Activated CD4-positive, alpha-beta T cell treated with anti-CD3 and anti-CD28 coated beads for 36 hours (primary cell): ENCODE measurements at regions of chr6 and their contacts with region 1.

Region 1: GRCh38 chr6:135535989-135536414 is 38.5 kb upstream of the AHI1 start:
- DNase-seq: peak; percentile 8
- ATAC-seq: no peak
- H3K4me3 Mint-ChIP-seq: no peak overlapping the region
- H3K27ac Mint-ChIP-seq: no peak overlapping the region
- H3K4me1 Mint-ChIP-seq: peaks cover 27% of the 10 kb centered on the region
- H3K27me3 Mint-ChIP-seq: peaks cover 3% of the 10 kb centered on the region

Region 2: DNA sequence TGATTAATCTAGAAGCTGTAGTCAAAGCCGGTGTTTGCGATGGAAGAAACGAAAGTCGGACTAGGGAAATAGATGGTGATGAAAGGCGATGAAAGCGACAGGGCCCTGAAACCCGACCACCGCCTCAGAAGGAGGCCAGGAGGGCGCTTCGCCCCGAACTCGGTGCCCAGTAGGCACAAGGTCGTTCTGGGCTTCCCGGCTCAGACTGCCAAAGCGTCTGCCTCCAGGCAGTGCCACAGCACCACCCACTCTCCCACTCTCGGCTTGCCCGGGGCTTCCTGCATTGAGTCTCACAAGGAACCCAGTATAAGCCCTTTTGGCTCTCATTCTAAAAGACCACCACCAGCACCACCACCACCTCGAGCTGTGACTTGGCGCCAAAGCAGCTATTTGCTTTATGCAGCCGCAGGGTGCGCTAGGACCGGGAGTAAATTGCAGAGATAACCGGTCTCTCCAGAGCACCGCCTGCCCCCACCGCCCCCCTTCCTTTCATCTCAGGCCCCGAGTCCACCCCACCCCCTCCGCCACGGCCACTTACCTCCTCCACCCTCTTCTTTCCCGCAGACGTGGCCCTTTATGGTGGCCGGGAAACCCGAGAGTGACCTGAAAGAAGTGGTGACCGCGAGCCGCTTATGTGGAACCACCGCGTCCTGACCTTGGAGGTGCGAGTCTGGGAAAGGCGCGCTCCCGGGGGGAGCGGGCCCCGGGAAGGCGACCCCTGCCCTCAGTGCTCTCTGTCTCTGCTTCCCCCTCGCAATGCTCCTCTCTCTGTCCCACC is 1644.7 kb before region 1 on chr6:
- CTCF ChIA-PET with region 1: no interaction called
- POLR2A ChIA-PET with region 1: no interaction called
- intact Hi-C with region 1: no loop called
- DNase-seq: peak; percentile 43
- ATAC-seq: peak; percentile 42
- H3K4me3 Mint-ChIP-seq: peak overlapping the region; percentile 63
- H3K27ac Mint-ChIP-seq: no peak overlapping the region
- H3K4me1 Mint-ChIP-seq: peaks cover 41% of the 10 kb centered on the region
- H3K27me3 Mint-ChIP-seq: peaks cover 76% of the 10 kb centered on the region

Region 3: DNA sequence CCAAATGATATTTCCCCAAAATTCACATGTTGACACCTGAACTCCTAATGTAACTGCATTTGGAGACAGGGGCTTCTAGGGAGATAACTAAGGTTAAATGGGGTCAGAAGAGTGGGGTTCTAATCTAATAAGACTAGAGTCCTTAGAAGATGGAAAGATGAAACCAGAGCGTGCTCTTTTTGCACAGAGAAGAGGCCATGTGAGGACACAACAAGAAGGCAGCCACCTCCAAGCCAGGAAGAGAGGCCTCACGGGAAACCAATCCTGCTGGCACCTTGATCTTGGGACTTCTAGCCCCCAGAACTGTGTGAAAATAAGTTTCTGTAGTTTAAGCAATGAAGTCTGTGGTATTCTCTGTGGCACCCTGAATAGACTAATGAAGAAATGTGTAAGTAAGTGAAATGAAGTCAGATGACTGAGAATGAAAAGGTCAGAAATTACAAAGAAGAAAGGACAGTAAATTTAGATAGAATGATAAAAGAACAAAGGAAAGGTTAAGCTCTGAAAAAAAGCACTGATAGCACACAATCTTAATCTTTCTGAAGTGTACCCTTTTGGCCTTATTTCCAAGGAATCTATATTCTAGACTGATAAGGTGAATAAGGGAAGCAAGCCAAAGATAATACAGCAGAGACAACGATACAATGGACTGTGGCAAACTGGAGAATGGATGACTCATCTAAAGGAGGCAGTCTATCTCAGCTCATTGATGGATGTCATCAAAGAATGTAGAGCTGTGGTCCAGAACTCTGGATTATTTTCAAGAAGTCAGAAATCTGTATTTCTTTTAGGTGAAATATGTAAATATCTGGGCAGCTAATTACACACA is 244.5 kb before region 1 on chr6:
- CTCF ChIA-PET with region 1: no interaction called
- POLR2A ChIA-PET with region 1: no interaction called
- intact Hi-C with region 1: no loop called
- DNase-seq: no peak
- ATAC-seq: peak; percentile 64
- H3K4me3 Mint-ChIP-seq: no peak overlapping the region
- H3K27ac Mint-ChIP-seq: no peak overlapping the region
- H3K4me1 Mint-ChIP-seq: peaks cover 8% of the 10 kb centered on the region
- H3K27me3 Mint-ChIP-seq: no peaks in the 10 kb centered on the region

Region 4: GRCh38 chr6:135451693-135452092 is 84.3 kb before region 1 on chr6:
- CTCF ChIA-PET with region 1: interaction called, 8 read pairs
- POLR2A ChIA-PET with region 1: no interaction called
- intact Hi-C with region 1: loop called in 1 of 2 experiments (anchors 2 kb)
- DNase-seq: no peak
- ATAC-seq: no peak
- H3K4me3 Mint-ChIP-seq: no peak overlapping the region
- H3K27ac Mint-ChIP-seq: no peak overlapping the region
- H3K4me1 Mint-ChIP-seq: no peaks in the 10 kb centered on the region
- H3K27me3 Mint-ChIP-seq: no peaks in the 10 kb centered on the region

Region 5: DNA sequence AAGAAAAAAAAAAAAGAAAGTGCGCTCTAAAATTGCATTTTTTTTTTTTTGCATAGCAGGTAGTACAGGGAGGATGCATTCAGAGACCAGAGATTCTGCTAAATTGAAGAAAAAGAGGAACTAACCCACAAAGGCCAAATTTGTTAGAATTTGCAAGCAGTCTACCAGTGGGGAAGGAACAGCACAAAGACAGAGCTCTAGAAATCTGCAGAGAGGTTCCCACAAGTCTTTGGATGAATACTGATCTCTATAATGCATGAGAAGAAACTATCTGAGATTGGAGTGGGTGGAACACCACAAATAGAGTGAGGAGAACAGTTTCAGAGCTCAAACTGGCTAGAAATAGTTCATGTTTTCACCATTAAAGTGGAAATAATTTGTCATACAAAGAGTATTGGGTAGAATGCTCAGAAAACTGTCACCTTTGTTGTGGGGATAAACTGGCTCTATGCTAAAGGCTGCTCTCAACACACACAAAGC is 41.1 kb after region 1 on chr6:
- CTCF ChIA-PET with region 1: interaction called, 10 read pairs
- POLR2A ChIA-PET with region 1: interaction called, 4 read pairs
- intact Hi-C with region 1: loop called (anchors 1 to 5 kb)
- DNase-seq: no peak
- ATAC-seq: peak; percentile 94
- H3K4me3 Mint-ChIP-seq: peak overlapping the region; percentile 8
- H3K27ac Mint-ChIP-seq: peak overlapping the region; percentile 70
- H3K4me1 Mint-ChIP-seq: peaks cover 23% of the 10 kb centered on the region
- H3K27me3 Mint-ChIP-seq: no peaks in the 10 kb centered on the region

Region 6: GRCh38 chr6:135647521-135647920 is 111.5 kb after region 1 on chr6:
- CTCF ChIA-PET with region 1: interaction called, 3 read pairs
- POLR2A ChIA-PET with region 1: no interaction called
- intact Hi-C with region 1: loop called in 1 of 2 experiments (anchors 1 kb)
- DNase-seq: peak; percentile 55
- ATAC-seq: peak; percentile 92
- H3K4me3 Mint-ChIP-seq: no peak overlapping the region
- H3K27ac Mint-ChIP-seq: peak overlapping the region; percentile 63
- H3K4me1 Mint-ChIP-seq: peaks cover 45% of the 10 kb centered on the region
- H3K27me3 Mint-ChIP-seq: no peaks in the 10 kb centered on the region

Region 7: DNA sequence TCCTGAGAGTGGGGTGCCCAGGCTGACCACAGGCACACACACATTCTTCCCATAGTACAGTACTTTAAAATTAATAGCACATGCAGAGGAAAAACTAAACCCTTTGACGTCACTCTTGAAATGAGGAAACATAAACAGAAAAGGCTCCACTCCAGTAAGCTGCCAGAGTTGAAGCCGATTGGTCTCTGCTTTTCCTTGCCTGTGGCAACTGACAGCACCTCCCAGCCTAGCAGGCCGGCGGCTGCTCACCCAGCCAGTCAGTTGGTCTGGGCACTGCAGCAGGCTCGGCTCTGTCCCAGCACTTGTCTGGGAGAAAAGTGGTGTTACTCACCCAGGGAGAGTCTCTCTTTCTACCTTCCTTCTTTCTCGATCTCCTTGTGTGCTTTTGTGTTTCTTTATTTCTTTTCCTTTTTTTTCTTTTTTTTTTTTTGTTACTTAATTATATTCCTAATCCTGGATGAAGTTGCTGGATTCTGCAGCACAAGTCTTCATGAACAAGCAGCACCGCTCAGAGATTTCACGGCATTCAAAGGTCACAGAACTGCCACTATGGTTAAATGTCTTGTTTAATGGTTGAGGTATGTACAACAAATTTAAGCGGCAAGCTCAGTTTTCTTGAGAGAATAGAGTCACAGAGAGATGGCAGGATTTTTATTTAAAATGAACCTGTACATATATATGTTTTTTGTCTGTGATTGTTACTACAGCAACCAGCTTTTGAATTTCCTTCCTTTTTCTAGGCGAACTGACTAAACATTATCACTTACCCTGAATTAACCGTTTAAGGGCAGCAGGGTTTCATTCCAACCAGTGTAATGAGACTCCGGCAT is 315.7 kb after region 1 on chr6 and contains the start of gene PDE7B:
- CTCF ChIA-PET with region 1: no interaction called
- POLR2A ChIA-PET with region 1: no interaction called
- intact Hi-C with region 1: loop called in 1 of 2 experiments (anchors 5 kb)
- DNase-seq: peak; percentile 73
- ATAC-seq: peak; percentile 91
- H3K4me3 Mint-ChIP-seq: peak within 1 kb of the TSS; percentile 66
- H3K27ac Mint-ChIP-seq: peak within 1 kb of the TSS; percentile 56
- H3K4me1 Mint-ChIP-seq: peaks cover 31% of the 10 kb centered on the region
- H3K27me3 Mint-ChIP-seq: no peaks in the 10 kb centered on the region
- total RNA-seq, gene PDE7B: 0.73 to 1.1 TPM

Region 8: DNA sequence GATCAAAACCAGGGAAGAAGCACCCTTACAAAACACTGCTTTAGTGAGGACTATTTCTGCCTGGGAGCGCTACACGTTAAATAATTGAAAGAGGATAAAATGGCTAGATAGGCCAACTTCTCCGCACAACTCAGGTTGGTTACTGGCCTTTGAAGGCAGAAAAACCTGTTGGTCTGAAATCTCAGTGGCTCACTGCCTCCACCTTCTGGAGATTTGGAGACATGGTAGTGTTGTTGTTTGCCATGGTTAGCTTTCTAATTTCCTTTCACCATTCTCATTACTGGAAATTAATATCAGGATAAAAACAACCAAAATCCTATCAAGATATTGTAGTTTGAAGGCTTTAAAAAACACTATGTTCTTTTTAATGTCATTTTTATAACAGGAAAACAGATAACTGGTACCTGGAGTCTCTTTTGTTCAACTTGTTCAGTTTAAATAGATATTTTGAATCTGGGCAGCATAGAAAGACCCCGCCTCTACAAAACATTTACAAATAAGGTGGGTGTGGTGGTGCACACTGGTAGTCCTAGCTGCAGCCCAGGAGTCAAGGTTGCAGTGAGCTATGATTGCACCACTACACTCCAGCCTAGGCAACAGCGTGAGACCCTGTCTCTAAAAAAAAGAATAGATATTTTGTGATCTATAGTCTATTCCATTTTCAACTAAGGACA is 781.2 kb after region 1 on chr6:
- CTCF ChIA-PET with region 1: no interaction called
- POLR2A ChIA-PET with region 1: no interaction called
- intact Hi-C with region 1: loop called in 1 of 2 experiments (anchors 1 kb)
- DNase-seq: peak; percentile 75
- ATAC-seq: peak; percentile 88
- H3K4me3 Mint-ChIP-seq: no peak overlapping the region
- H3K27ac Mint-ChIP-seq: no peak overlapping the region
- H3K4me1 Mint-ChIP-seq: no peaks in the 10 kb centered on the region
- H3K27me3 Mint-ChIP-seq: no peaks in the 10 kb centered on the region